ENCODE measurements at regions of chr10 and their contacts with region 1.

Region 1: DNA sequence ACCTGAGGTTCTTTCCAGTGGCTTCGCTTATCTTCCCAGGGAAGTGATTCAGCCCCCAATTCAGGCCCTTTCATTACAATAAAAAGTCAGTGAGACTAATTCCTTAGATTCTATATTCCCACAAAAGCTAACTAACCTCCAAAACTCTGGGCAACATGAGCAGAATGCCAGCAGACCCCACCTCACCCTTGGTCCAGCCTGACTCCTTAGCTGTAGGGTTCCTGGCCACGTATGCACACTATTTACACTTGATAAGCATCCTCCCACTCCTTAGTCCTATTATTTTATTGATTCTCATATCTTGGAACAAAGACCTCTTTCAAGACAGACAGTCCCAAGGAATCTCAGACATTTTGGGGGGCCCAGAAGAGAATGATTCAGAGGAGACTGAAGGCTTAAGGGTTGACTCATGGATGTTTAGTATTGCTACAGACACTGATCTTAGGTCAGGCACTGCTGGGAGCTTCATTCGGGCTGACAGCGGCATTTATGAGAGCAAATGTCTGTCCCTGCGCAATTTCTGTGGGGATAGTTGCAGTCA is 162.6 kb upstream of the GDF10 start:
- DNase-seq: peak; percentile 57
- H3K4me3 Mint-ChIP-seq: peak overlapping the region; percentile 59
- H3K27ac Mint-ChIP-seq: peak overlapping the region; percentile 61
- H3K4me1 Mint-ChIP-seq: peaks cover 33% of the 10 kb centered on the region
- H3K27me3 Mint-ChIP-seq: no peaks in the 10 kb centered on the region
- CTCF ChIP-seq: no peak

Region 2: GRCh38 chr10:47076949-47077361 is 60.4 kb before region 1 on chr10:
- CTCF ChIA-PET with region 1: no interaction called
- intact Hi-C with region 1: loop called (anchors 10 kb)
- DNase-seq: no peak
- H3K4me3 Mint-ChIP-seq: no peak overlapping the region
- H3K27ac Mint-ChIP-seq: no peak overlapping the region
- H3K4me1 Mint-ChIP-seq: peaks cover 23% of the 10 kb centered on the region
- H3K27me3 Mint-ChIP-seq: peaks cover 24% of the 10 kb centered on the region
- CTCF ChIP-seq: no peak